Activated CD4-positive, alpha-beta T cell treated with anti-CD3 and anti-CD28 coated beads, Interleukin-2, amount 10 ng/mL, durations not matched to agents 7 days and 5 days (primary cell): ENCODE measurements at regions of chr22 and their contacts with region 1.

Region 1: GRCh38 chr22:35592418-35592967 is 24.6 kb downstream of the MB start:
- DNase-seq: no peak
- H3K4me3 Mint-ChIP-seq: no peak overlapping the region
- H3K27ac Mint-ChIP-seq: no peak overlapping the region
- H3K4me1 Mint-ChIP-seq: no peaks in the 10 kb centered on the region
- H3K27me3 Mint-ChIP-seq: no peaks in the 10 kb centered on the region

Region 2: DNA sequence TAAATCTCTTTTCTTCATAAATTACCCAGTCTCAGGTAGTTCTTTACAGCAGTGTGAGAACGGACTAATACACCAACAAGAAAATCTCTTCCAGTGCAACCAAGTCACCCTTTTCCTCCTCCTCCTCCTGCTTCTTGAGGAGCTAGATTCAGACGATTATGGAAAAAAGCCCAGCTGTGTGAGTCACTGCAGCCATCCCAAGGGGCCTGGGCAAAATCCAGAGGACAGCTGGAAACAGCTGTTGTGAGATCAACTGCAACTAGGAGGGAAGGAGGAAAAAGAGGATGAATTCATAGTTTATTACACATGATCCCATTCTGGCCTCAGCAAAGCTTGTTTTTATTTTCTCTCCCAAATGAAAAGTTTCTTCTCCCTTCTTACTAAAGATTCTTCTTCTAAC is 403.3 kb after region 1 on chr22:
- CTCF ChIA-PET with region 1: no interaction called
- POLR2A ChIA-PET with region 1: interaction called, 11 read pairs
- DNase-seq: no peak
- H3K4me3 Mint-ChIP-seq: no peak overlapping the region
- H3K27ac Mint-ChIP-seq: no peak overlapping the region
- H3K4me1 Mint-ChIP-seq: no peaks in the 10 kb centered on the region
- H3K27me3 Mint-ChIP-seq: peaks cover 6% of the 10 kb centered on the region